Mammary epithelial cell (primary cell): ENCODE measurements at regions of chr3 and their contacts with region 1.

Region 1: DNA sequence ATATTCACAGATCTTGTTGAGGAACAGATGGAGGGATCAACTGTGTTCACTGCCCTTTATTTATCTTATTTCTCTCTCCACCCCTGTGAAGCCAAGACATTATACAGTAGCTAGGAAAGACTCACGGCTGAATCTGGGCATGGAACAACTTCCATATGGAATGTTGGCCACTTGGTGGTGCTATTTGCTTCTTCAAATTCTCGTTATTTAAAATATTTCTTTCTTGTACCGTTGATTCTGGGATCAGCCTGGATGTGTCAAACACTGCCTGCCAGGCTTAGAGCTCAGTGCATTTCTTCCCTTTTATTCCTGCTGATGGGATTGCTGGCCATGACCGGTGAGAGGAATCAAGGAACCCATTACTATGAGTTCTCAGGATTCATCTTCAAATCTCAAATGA is 17.5 kb upstream of the GASK1A start:
- DNase-seq: peak; percentile 37
- H3K4me3 ChIP-seq: no peak overlapping the region
- H3K27ac ChIP-seq: no peak overlapping the region
- H3K4me1 ChIP-seq: no peaks in the 10 kb centered on the region
- H3K27me3 ChIP-seq: peaks cover 2% of the 10 kb centered on the region
- CTCF ChIP-seq: peak; percentile 66 to 67

Region 2: GRCh38 chr3:43087249-43087776 is 125.7 kb after region 1 on chr3:
- CTCF ChIA-PET with region 1: no interaction called
- dilution Hi-C with region 1: no loop called
- in situ Hi-C with region 1: no loop called
- intact Hi-C with region 1: loop called (anchors 10 kb)
- DNase-seq: no peak
- H3K4me3 ChIP-seq: no peak overlapping the region
- H3K27ac ChIP-seq: no peak overlapping the region
- H3K4me1 ChIP-seq: no peaks in the 10 kb centered on the region
- H3K27me3 ChIP-seq: no peaks in the 10 kb centered on the region
- CTCF ChIP-seq: peak; percentile 1 to 32

Region 3: GRCh38 chr3:43155464-43156121 is 194.0 kb after region 1 on chr3:
- CTCF ChIA-PET with region 1: no interaction called
- dilution Hi-C with region 1: loop called (anchors 10 kb)
- in situ Hi-C with region 1: loop called (anchors 5 kb)
- intact Hi-C with region 1: loop called (anchors 1 kb)
- DNase-seq: peak; percentile 76
- H3K4me3 ChIP-seq: no peak overlapping the region
- H3K27ac ChIP-seq: no peak overlapping the region
- H3K4me1 ChIP-seq: no peaks in the 10 kb centered on the region
- H3K27me3 ChIP-seq: peaks cover 6% of the 10 kb centered on the region
- CTCF ChIP-seq: peak; percentile 68 to 79

Region 4: GRCh38 chr3:43378066-43378935 is 416.7 kb after region 1 on chr3:
- CTCF ChIA-PET with region 1: no interaction called
- dilution Hi-C with region 1: no loop called
- in situ Hi-C with region 1: loop called in 1 of 2 experiments (anchors 25 kb)
- intact Hi-C with region 1: no loop called
- DNase-seq: peak; percentile 43
- H3K4me3 ChIP-seq: no peak overlapping the region
- H3K27ac ChIP-seq: no peak overlapping the region
- H3K4me1 ChIP-seq: no peaks in the 10 kb centered on the region
- H3K27me3 ChIP-seq: no peaks in the 10 kb centered on the region
- CTCF ChIP-seq: peak; percentile 86 to 87

Region 5: DNA sequence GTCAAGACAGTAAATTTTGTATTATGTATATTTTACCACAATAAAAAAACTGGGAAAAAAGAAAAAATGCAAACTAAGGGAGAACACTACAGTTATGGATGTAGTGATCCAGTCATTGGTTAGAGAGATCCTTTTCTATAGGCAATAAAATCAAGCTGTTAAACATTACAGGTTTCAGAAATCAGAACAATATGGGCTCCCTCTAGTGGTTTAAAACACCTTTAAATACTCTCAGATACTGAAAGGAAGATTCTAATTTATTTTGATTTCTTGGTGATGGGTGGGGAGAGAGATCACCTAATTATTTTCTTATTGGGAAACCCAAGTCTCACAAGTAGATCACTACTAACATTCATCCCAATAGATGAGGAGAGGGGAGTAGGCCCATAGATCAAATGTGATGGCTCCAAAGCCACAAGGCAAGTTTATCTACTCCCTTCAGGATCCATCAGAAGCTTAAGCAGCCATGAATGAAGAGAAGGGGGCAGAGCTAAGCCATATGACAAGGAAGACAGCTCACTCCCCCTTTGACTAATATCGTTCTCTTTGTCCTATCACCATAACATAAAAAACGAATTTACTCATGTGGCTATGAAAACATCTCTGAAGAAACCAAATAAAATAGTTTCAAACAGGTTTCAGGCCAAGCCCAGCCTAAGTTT is 541.6 kb after region 1 on chr3:
- CTCF ChIA-PET with region 1: no interaction called
- dilution Hi-C with region 1: no loop called
- in situ Hi-C with region 1: loop called in 1 of 2 experiments (anchors 25 kb)
- intact Hi-C with region 1: loop called (anchors 10 kb)
- DNase-seq: no peak
- H3K4me3 ChIP-seq: no peak overlapping the region
- H3K27ac ChIP-seq: no peak overlapping the region
- H3K4me1 ChIP-seq: peaks cover 3% of the 10 kb centered on the region
- H3K27me3 ChIP-seq: no peaks in the 10 kb centered on the region
- CTCF ChIP-seq: peak; percentile 45 to 48